ENCODE measurements at regions of chr22 and their contacts with region 1.

Region 1: GRCh38 chr22:21952586-21953571 is at the start of gene PPM1F:
- DNase-seq: peak; percentile 93
- H3K4me3 Mint-ChIP-seq: peak within 1 kb of the TSS; percentile 83
- H3K27ac Mint-ChIP-seq: no peak within 1 kb of the TSS
- H3K4me1 Mint-ChIP-seq: peaks cover 10% of the 10 kb centered on the region
- H3K27me3 Mint-ChIP-seq: no peaks in the 10 kb centered on the region
- total RNA-seq, gene PPM1F: 21.7 to 21.9 TPM

Region 2: GRCh38 chr22:21712894-21713712 is 239.8 kb before region 1 on chr22:
- CTCF ChIA-PET with region 1: interaction called, 23 read pairs
- POLR2A ChIA-PET with region 1: interaction called, 3 read pairs
- intact Hi-C with region 1: loop called (anchors 2 kb)
- DNase-seq: peak; percentile 68
- H3K4me3 Mint-ChIP-seq: no peak overlapping the region
- H3K27ac Mint-ChIP-seq: no peak overlapping the region
- H3K4me1 Mint-ChIP-seq: peaks cover 8% of the 10 kb centered on the region
- H3K27me3 Mint-ChIP-seq: no peaks in the 10 kb centered on the region

Region 3: DNA sequence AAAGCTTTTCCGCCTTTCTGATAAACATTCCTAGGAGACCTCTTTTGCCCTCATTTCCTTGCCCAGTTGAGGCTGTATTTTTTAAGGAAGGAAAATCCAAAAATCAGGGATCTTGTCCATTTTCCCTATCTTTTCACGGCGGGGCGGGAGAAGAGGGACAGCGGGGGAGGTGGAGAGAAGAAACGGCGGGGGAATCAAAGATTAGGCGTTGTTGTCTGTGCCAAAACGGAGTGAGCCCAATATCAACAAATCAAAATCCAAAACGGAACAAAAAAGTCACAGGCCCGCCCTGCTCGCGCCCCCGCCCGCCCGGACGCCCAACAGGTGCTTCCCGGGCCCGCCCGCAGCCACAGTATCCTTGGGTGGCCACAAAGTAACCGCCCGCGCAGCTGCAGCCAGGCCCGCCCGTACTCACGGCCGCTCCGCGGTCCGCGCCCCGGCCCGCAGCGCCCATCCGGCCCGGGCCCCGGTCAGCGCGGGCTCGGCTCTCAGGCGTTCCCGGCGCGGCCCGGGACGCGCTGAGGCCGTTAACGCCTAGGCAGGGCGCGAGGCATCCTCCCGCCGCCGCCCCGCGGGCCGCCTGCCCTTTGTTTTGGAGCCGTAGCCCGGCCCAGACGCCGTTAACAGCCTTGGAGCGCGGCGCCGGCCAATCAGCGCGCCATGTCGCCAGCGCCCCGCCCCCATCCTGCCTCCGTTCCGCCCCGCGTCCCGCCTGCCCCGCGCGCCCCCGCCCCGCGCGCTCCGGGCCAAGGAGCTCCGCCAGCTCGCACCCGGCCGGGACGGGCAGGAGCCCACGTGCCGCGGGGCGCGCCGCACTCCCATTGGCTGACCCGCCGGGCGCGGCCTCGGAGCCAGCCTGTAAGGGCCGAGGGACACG is 217.4 kb before region 1 on chr22 and contains the start of gene YPEL1:
- CTCF ChIA-PET with region 1: interaction called, 13 read pairs
- POLR2A ChIA-PET with region 1: no interaction called
- intact Hi-C with region 1: no loop called
- DNase-seq: peak; percentile 95
- H3K4me3 Mint-ChIP-seq: peak within 1 kb of the TSS; percentile 80
- H3K27ac Mint-ChIP-seq: peak within 1 kb of the TSS; percentile 49
- H3K4me1 Mint-ChIP-seq: peaks cover 13% of the 10 kb centered on the region
- H3K27me3 Mint-ChIP-seq: peaks cover 1% of the 10 kb centered on the region
- total RNA-seq, gene YPEL1: 1.6 to 1.8 TPM

Region 4: GRCh38 chr22:21938071-21938822 is 14.6 kb before region 1 on chr22:
- CTCF ChIA-PET with region 1: interaction called, 140 read pairs
- POLR2A ChIA-PET with region 1: interaction called, 3 read pairs
- intact Hi-C with region 1: loop called (anchors 2 kb)
- DNase-seq: peak; percentile 94
- H3K4me3 Mint-ChIP-seq: peak overlapping the region; percentile 71
- H3K27ac Mint-ChIP-seq: peak overlapping the region; percentile 77
- H3K4me1 Mint-ChIP-seq: peaks cover 31% of the 10 kb centered on the region
- H3K27me3 Mint-ChIP-seq: no peaks in the 10 kb centered on the region

Region 5: GRCh38 chr22:21972293-21972779 is 19.5 kb after region 1 on chr22:
- CTCF ChIA-PET with region 1: interaction called, 20 read pairs
- POLR2A ChIA-PET with region 1: no interaction called
- intact Hi-C with region 1: no loop called
- DNase-seq: peak; percentile 68
- H3K4me3 Mint-ChIP-seq: no peak overlapping the region
- H3K27ac Mint-ChIP-seq: no peak overlapping the region
- H3K4me1 Mint-ChIP-seq: no peaks in the 10 kb centered on the region
- H3K27me3 Mint-ChIP-seq: no peaks in the 10 kb centered on the region

Region 6: GRCh38 chr22:21996175-21996720 is 43.4 kb after region 1 on chr22:
- CTCF ChIA-PET with region 1: no interaction called
- POLR2A ChIA-PET with region 1: no interaction called
- intact Hi-C with region 1: no loop called
- DNase-seq: no peak
- H3K4me3 Mint-ChIP-seq: no peak overlapping the region
- H3K27ac Mint-ChIP-seq: no peak overlapping the region
- H3K4me1 Mint-ChIP-seq: no peaks in the 10 kb centered on the region
- H3K27me3 Mint-ChIP-seq: peaks cover 3% of the 10 kb centered on the region